ENCODE measurements at regions of chr7 and their contacts with region 1.

Region 1: GRCh38 chr7:23712368-23713284 is 2.6 kb downstream of the STK31 start:
- DNase-seq: no peak
- ATAC-seq: no peak
- H3K4me3 ChIP-seq: no peak overlapping the region
- H3K27ac ChIP-seq: no peak overlapping the region
- H3K4me1 ChIP-seq: no peaks in the 10 kb centered on the region
- H3K27me3 ChIP-seq: no peaks in the 10 kb centered on the region

Region 2: DNA sequence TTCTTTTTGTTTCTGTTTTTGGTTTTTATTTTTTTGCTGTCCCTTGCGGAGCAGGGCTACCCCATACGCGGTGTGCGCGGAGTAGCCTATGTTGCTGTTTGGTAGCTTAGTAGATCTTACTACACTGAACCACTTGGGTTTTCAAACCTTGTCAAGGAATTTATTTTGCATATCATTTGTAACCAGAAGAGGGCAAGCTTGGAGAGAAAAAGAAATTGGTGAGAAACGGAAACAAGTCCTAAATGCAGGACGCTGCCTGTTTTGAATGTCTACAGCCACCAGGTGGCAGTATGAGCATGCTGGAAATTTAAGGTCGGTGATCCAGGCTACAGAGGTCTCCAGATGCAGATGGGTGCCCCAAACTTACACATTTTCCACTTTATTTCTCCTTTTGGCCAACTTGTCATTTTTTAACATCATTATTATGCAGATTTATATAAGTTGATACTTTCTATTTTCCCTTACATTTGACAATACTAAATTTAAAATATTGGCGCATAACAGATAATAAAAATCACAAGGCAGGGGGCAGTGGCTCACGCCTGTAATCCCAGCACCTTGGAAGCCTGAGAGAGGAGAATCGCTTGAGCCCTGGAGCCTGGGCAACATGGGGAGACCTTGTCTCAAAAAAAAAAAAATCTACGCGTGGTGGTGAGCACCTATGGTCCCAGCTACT is 165.6 kb before region 1 on chr7:
- intact Hi-C with region 1: loop called (anchors 5 kb)
- DNase-seq: peak; percentile 73 to 79
- ATAC-seq: peak; percentile 93
- H3K4me3 ChIP-seq: no peak overlapping the region
- H3K27ac ChIP-seq: no peak overlapping the region
- H3K4me1 ChIP-seq: no peaks in the 10 kb centered on the region
- H3K27me3 ChIP-seq: no peaks in the 10 kb centered on the region

Region 3: DNA sequence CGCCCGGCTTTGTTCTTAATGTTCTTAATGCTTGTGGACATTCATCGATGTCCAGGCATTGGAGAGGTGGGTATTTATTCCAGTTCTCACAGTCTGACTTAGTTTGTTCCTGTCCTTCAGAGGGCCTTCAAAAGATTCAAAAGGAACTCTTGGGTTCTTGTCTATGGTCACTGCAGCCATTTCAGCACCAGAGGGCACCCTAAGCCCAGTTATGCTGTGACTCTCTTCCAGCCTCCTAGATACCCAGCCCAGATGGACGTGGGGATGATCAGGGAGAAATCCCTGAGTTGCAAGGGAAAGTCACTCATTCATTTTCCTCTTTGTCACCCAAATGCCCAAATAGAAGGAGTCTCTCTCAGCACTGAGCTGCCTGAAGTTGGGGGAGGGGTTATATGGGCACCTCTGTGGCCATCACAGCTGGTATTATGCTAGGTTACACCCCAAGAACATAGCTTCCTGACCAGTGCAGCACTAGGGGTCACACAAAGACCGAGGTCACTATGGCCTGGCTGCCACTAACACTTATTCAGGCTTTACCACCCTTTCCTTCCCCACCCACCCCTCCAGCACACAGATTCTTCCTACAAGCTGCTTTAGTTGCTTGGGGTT is 141.9 kb before region 1 on chr7:
- intact Hi-C with region 1: loop called (anchors 1 to 2 kb)
- DNase-seq: peak; percentile 84 to 85
- ATAC-seq: peak; percentile 88
- H3K4me3 ChIP-seq: no peak overlapping the region
- H3K27ac ChIP-seq: no peak overlapping the region
- H3K4me1 ChIP-seq: no peaks in the 10 kb centered on the region
- H3K27me3 ChIP-seq: no peaks in the 10 kb centered on the region